ENCODE measurements at regions of chr15 and their contacts with region 1.

Region 1: GRCh38 chr15:90851114-90851513 is 17.3 kb upstream of the FURIN start:
- DNase-seq: peak; percentile 83
- H3K4me3 Mint-ChIP-seq: peak overlapping the region; percentile 25
- H3K27ac Mint-ChIP-seq: peak overlapping the region; percentile 98
- H3K4me1 Mint-ChIP-seq: peaks cover 51% of the 10 kb centered on the region
- H3K27me3 Mint-ChIP-seq: no peaks in the 10 kb centered on the region

Region 2: GRCh38 chr15:90489514-90489913 is 361.6 kb before region 1 on chr15:
- CTCF ChIA-PET with region 1: no interaction called
- POLR2A ChIA-PET with region 1: no interaction called
- intact Hi-C with region 1: no loop called
- DNase-seq: no peak
- H3K4me3 Mint-ChIP-seq: no peak overlapping the region
- H3K27ac Mint-ChIP-seq: no peak overlapping the region
- H3K4me1 Mint-ChIP-seq: peaks cover 5% of the 10 kb centered on the region
- H3K27me3 Mint-ChIP-seq: no peaks in the 10 kb centered on the region

Region 3: DNA sequence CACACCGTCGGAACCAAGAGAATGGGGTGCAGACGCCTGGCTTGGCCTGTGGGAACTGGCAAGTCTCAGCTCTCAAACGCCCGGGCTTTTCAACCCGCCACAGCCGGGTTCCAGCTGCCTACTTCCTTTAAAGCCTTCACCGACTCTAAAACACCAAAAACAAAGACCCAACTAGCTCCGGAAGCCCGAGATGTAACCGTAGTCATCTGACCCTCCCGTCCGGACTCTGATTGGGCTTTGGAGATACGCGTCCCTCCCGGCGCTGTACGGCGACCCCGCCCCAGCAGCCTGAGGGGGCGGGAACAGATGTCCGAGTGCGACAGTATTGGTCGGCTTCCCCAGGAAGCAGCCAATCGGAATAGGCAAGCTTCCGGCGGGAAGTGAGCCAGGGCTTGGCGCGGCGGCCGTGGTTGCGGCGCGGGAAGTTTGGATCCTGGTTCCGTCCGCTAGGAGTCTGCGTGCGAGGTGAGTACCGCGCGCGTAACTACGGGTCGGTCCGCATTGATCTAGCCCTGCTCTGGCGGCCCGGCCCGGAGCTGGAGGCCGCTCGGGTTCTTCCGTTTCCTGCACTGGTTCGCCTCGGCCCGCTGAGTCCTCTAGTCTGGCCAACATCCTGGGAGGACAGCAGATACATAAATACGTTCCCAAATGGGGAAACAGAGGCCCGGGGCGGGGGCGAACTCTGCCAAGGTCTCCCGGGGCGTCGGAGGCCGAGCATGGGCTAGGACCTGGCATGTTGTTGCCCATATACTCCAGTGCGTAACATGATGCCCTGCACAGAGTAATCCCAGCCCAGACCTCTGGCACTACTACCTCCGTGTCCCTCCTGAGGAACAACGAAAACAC is 133.9 kb before region 1 on chr15 and contains the start of gene BLM:
- CTCF ChIA-PET with region 1: interaction called, 3 read pairs
- POLR2A ChIA-PET with region 1: interaction called, 10 read pairs
- intact Hi-C with region 1: no loop called
- DNase-seq: peak; percentile 97
- H3K4me3 Mint-ChIP-seq: peak within 1 kb of the TSS; percentile 84
- H3K27ac Mint-ChIP-seq: peak within 1 kb of the TSS; percentile 91
- H3K4me1 Mint-ChIP-seq: peaks cover 24% of the 10 kb centered on the region
- H3K27me3 Mint-ChIP-seq: no peaks in the 10 kb centered on the region
- total RNA-seq, gene BLM: 65.6 to 68.7 TPM

Region 4: DNA sequence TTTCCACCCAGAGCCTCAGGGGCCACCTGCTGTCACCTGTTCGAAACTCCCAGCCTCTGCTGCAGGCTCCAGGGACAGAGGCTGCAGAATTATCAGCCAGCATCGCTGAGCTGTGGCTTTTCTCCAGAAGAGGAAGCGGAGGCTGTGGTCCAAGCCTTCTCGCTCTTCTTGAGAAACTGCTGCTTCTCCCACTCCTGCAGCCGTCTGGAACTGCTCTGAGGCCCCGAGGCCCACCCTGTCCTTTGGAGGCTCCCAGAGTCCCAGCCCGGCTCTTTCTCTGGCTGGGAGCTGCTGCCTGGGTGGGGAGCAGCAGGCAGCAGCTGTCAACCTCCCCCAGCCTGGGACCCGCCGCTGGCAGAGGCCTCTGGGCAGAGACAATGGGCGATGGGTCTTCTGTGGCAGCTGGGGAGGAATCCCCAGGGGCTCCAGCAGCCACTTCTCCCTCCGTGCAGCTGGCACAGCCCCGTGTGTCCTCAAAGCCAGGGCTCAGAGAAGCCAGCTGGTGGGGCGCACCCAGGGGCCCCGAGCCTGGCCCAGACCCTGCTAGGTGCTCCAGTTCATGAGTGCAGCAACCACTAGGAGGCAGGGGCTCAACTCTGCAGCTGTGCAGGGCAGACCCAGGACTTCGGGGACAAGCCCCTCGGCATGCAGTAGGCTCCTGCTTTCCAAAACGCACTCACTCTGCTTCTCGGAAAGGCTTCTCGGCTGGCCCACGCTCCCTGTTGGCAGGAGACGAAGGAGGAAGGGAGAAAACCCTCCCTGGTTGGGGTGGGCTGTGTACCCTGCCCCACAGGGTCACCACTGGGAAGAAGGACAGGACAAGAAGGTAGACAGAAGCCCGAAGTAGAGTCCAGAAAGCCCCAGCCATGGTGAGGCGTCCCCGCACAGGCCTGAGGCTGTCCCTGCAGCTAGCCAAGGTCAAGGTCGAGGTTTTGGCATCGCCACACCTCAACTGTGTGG is 32.6 kb before region 1 on chr15:
- CTCF ChIA-PET with region 1: no interaction called
- POLR2A ChIA-PET with region 1: interaction called, 11 read pairs
- intact Hi-C with region 1: loop called (anchors 1 kb)
- DNase-seq: peak; percentile 62
- H3K4me3 Mint-ChIP-seq: peak overlapping the region; percentile 20
- H3K27ac Mint-ChIP-seq: peak overlapping the region; percentile 86
- H3K4me1 Mint-ChIP-seq: peaks cover 51% of the 10 kb centered on the region
- H3K27me3 Mint-ChIP-seq: no peaks in the 10 kb centered on the region

Region 5: GRCh38 chr15:90829942-90830440 is 21.1 kb before region 1 on chr15:
- CTCF ChIA-PET with region 1: no interaction called
- POLR2A ChIA-PET with region 1: interaction called, 33 read pairs
- intact Hi-C with region 1: loop called (anchors 1 kb)
- DNase-seq: peak; percentile 91
- H3K4me3 Mint-ChIP-seq: peak overlapping the region; percentile 59
- H3K27ac Mint-ChIP-seq: peak overlapping the region; percentile 100
- H3K4me1 Mint-ChIP-seq: peaks cover 39% of the 10 kb centered on the region
- H3K27me3 Mint-ChIP-seq: no peaks in the 10 kb centered on the region

Region 6: GRCh38 chr15:90839187-90840071 is 11.7 kb before region 1 on chr15:
- CTCF ChIA-PET with region 1: interaction called, 3 read pairs
- POLR2A ChIA-PET with region 1: interaction called, 52 read pairs
- intact Hi-C with region 1: loop called (anchors 1 kb)
- DNase-seq: peak; percentile 61
- H3K4me3 Mint-ChIP-seq: peak overlapping the region; percentile 69
- H3K27ac Mint-ChIP-seq: peak overlapping the region; percentile 94
- H3K4me1 Mint-ChIP-seq: peaks cover 57% of the 10 kb centered on the region
- H3K27me3 Mint-ChIP-seq: no peaks in the 10 kb centered on the region

Region 7: DNA sequence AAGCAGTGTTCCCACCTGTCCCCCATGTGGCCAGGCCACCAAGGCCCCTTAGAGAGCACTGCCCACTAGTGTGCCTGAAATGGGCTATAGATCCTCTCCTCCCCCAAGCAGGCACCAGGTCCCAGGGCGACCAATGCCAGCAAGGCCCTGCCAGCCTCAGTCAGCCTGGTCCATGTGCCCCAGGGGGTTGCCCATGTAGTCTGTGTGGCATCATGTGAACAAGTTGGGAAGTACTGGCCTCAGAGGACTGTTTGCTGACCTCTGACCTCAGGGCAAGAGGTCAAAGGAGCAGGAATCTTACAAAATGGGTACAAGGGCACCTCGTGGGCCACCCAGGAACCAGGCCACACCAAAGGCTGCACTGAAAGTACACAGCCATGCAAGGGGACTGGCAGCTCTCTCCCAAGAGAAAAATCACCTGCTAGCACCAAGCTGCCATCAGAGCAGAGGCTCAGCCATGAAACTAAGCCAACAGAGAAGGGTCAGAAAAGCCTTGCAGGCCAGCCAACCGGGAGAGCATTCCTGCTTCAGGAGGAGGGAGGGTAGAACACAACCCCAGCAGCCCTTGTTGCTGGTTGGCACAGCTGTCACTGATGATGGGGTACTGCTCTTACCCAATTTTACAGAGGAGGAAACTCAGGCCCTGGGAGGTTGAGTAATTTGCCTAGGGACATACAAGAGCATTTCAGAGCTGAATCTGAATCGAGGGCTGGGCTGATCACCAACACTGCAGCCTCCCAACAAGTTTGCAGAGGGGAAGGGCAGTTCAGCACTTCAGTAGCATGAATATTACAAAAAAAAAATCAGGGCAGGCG is 12.1 kb after region 1 on chr15:
- CTCF ChIA-PET with region 1: no interaction called
- POLR2A ChIA-PET with region 1: interaction called, 10 read pairs
- intact Hi-C with region 1: loop called (anchors 1 kb)
- DNase-seq: no peak
- H3K4me3 Mint-ChIP-seq: no peak overlapping the region
- H3K27ac Mint-ChIP-seq: peak overlapping the region; percentile 87
- H3K4me1 Mint-ChIP-seq: peaks cover 40% of the 10 kb centered on the region
- H3K27me3 Mint-ChIP-seq: no peaks in the 10 kb centered on the region

Region 8: DNA sequence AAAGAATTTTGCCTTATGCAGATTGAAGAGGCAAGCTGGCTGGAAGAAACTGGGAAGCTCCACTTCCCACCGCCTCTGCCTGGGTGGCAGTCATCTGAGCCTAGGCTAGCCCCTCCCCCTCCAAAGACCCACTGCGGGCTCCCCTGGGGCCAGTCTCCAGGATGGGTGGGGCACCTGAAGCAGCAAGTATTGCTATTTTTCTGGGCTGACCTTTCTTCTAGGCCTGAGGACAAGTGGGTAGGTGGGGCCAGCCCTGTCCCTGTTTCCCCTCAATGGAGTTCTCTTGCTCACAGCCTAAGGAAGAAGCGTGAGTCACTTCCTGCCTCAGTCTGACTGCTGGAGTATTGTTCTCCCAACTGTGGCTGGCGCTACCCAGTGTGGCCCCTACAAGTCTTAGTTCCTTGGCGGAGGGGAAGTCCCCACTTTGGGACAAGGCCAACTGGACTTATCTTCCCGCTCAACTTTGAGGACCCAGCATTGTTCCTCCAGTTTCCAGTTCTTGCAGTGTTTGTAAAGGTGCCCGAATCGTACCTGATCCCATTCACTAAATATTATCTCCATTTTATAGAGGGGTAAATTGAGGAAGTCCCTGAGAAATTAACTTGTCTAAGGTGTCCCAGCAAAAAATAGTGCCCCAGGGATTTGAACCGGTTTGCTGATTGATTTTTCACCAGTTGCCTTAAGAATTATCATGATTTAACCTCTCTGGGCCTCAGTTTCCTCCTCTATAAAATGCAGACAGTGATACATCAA is 18.7 kb after region 1 on chr15:
- CTCF ChIA-PET with region 1: interaction called, 3 read pairs
- POLR2A ChIA-PET with region 1: interaction called, 25 read pairs
- intact Hi-C with region 1: loop called (anchors 1 kb)
- DNase-seq: peak; percentile 81
- H3K4me3 Mint-ChIP-seq: peak overlapping the region; percentile 91
- H3K27ac Mint-ChIP-seq: peak overlapping the region; percentile 97
- H3K4me1 Mint-ChIP-seq: peaks cover 56% of the 10 kb centered on the region
- H3K27me3 Mint-ChIP-seq: no peaks in the 10 kb centered on the region

Region 9: DNA sequence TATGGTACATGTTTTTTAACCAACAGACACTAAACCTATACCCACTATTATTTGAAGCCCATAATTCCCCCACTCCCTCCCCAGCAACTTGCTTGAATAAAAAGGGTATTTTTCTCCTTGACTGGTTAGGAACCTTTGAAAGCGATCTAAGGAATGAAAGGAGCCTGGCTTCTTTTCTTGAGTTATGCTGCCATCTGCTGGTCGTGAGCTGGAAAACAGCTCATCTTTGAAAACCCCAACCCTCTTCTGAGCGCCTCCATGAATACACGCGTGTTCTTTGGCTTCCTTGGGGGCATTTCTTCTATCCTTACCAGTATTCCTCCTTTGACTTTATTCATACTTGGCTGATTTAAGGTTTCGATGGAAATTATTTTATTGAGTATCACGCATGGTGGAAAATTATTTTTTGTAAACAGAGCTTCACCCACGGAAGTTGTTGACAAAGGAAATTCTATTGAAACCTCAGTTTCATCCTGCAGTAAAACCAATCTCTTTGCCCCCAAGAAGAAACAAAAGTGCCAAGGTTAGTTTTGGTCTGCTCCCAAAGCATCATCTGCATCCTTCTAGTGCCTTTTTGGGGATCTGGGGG is 420.5 kb after region 1 on chr15:
- CTCF ChIA-PET with region 1: no interaction called
- POLR2A ChIA-PET with region 1: no interaction called
- intact Hi-C with region 1: no loop called
- DNase-seq: peak; percentile 72
- H3K4me3 Mint-ChIP-seq: peak overlapping the region; percentile 16
- H3K27ac Mint-ChIP-seq: no peak overlapping the region
- H3K4me1 Mint-ChIP-seq: peaks cover 8% of the 10 kb centered on the region
- H3K27me3 Mint-ChIP-seq: peaks cover 17% of the 10 kb centered on the region

Measured in activated CD4-positive, alpha-beta memory T cell treated with anti-CD3 and anti-CD28 coated beads for 36 hours (primary cell).